Endothelial cell of umbilical vein (primary cell): ENCODE measurements at regions of chr10 and their contacts with region 1.

Region 1: GRCh38 chr10:76830218-76830617 is 807.4 kb downstream of the KCNMA1 start:
- DNase-seq: no peak
- H3K4me3 ChIP-seq: no peak overlapping the region
- H3K27ac ChIP-seq: no peak overlapping the region
- H3K4me1 ChIP-seq: no peaks in the 10 kb centered on the region
- H3K27me3 ChIP-seq: no peaks in the 10 kb centered on the region
- CTCF ChIP-seq: no peak
- POLR2A ChIP-seq: no peak

Region 2: GRCh38 chr10:76786504-76787072 is 43.6 kb before region 1 on chr10:
- CTCF ChIA-PET with region 1: no interaction called
- POLR2A ChIA-PET with region 1: no interaction called
- dilution Hi-C with region 1: no loop called
- intact Hi-C with region 1: loop called (anchors 1 kb)
- DNase-seq: no peak
- H3K4me3 ChIP-seq: no peak overlapping the region
- H3K27ac ChIP-seq: no peak overlapping the region
- H3K4me1 ChIP-seq: no peaks in the 10 kb centered on the region
- H3K27me3 ChIP-seq: no peaks in the 10 kb centered on the region
- CTCF ChIP-seq: no peak
- POLR2A ChIP-seq: no peak